IMR-90 (cell line): ENCODE measurements at regions of chr13 and their contacts with region 1.

Region 1: DNA sequence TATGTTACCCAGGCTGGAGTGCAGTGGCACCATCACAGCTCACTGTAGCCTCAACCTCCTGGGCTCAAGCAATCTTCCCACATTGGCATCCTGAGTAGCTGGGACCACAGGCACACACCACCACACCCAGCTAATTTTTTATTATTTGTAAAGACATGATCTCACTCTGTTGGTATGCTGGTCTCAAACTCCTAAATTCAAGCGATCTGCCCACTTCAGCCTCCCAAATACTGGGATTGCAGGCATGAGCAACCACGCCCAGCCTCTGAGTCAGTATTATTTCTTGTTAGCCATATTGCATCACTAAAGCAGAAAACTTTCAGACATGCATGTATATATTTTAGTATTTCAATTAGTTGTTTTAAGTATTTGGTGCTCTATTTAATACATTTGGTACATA is 376.4 kb downstream of the GPC6 start:
- DNase-seq: peak; percentile 82
- ATAC-seq: peak; percentile 93
- H3K4me3 ChIP-seq: no peak overlapping the region
- H3K27ac ChIP-seq: no peak overlapping the region
- H3K4me1 ChIP-seq: peaks cover 3% of the 10 kb centered on the region
- H3K27me3 ChIP-seq: no peaks in the 10 kb centered on the region
- CTCF ChIP-seq: no peak
- POLR2A ChIP-seq: no peak
- RAD21 ChIP-seq: no peak

Region 2: DNA sequence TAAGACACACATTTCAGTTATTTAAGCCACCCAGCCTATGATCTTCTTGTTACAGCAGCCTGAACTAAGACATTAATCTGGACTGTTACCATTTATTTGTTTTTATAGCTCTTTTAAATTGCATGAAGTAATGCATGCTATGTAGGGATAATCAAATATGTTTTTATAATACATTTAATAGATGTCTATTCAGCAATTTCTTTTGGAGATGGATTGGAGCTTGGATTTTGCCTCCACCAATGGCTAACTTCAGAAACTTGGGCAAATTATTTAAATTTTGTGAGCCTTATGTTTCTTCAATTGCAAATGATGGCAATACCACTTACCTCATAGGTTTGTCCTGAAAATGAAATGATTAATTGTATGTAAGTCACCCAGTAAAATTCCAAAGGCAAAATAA is 87.8 kb before region 1 on chr13:
- CTCF ChIA-PET with region 1: no interaction called
- POLR2A ChIA-PET with region 1: interaction called, 12 read pairs
- dilution Hi-C with region 1: no loop called
- in situ Hi-C with region 1: no loop called
- intact Hi-C with region 1: no loop called
- DNase-seq: no peak
- ATAC-seq: no peak
- H3K4me3 ChIP-seq: no peak overlapping the region
- H3K27ac ChIP-seq: no peak overlapping the region
- H3K4me1 ChIP-seq: no peaks in the 10 kb centered on the region
- H3K27me3 ChIP-seq: no peaks in the 10 kb centered on the region
- CTCF ChIP-seq: no peak
- POLR2A ChIP-seq: no peak
- RAD21 ChIP-seq: no peak

Region 3: GRCh38 chr13:93900731-93901130 is 297.7 kb after region 1 on chr13:
- CTCF ChIA-PET with region 1: no interaction called
- POLR2A ChIA-PET with region 1: no interaction called
- dilution Hi-C with region 1: no loop called
- in situ Hi-C with region 1: no loop called
- intact Hi-C with region 1: loop called (anchors 10 kb)
- DNase-seq: peak; percentile 67
- ATAC-seq: peak; percentile 64
- H3K4me3 ChIP-seq: no peak overlapping the region
- H3K27ac ChIP-seq: peak overlapping the region; percentile 79; the same call in 1 of the 2 replicates
- H3K4me1 ChIP-seq: peaks cover 7% of the 10 kb centered on the region
- H3K27me3 ChIP-seq: no peaks in the 10 kb centered on the region
- CTCF ChIP-seq: no peak
- POLR2A ChIP-seq: no peak
- RAD21 ChIP-seq: no peak

Region 4: DNA sequence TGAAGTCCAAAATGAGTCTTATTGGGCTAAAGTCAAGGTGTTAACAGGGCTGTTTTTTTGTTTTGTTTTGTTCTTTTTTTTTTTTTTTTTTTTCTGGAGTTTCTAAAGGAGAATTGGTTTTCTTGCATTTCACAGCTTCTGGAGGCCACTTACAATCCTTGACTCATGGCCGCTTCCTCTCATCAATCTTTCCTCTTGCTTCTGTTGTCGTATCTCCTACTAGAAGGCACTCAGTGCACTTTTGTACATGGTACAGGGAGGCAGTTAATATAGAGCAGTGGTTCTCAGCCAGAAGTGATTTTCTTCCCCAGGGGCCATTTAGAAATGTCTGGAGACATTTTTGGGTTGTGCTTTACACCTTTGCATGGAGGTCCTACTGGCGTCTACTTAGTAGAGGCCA is 329.9 kb after region 1 on chr13:
- CTCF ChIA-PET with region 1: no interaction called
- POLR2A ChIA-PET with region 1: no interaction called
- dilution Hi-C with region 1: no loop called
- in situ Hi-C with region 1: no loop called
- intact Hi-C with region 1: no loop called
- DNase-seq: no peak
- ATAC-seq: no peak
- H3K4me3 ChIP-seq: no peak overlapping the region
- H3K27ac ChIP-seq: no peak overlapping the region
- H3K4me1 ChIP-seq: no peaks in the 10 kb centered on the region
- H3K27me3 ChIP-seq: no peaks in the 10 kb centered on the region
- CTCF ChIP-seq: no peak
- POLR2A ChIP-seq: no peak
- RAD21 ChIP-seq: no peak

Region 5: DNA sequence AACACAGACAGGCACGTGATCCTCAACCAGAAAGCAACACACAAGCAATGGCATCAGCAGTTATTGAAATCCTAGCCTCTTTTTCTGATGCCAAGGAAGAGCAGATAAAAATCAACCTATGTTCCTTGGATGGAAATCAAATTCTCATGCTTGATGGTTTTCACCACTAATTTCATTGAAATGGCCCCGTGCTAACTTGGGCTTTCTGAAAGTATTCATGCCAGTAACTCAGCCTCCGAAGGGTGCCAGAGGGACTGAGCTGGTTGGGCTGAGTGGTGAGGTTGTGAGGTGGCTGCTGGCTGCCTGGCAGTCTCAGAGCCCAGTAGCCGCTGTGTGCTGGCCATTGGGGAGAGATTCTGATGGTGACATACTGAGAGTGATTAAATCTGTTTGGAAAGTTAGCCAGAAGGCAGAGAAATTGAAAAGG is 567.1 kb after region 1 on chr13:
- CTCF ChIA-PET with region 1: no interaction called
- POLR2A ChIA-PET with region 1: no interaction called
- dilution Hi-C with region 1: no loop called
- in situ Hi-C with region 1: no loop called
- intact Hi-C with region 1: no loop called
- DNase-seq: no peak
- ATAC-seq: no peak
- H3K4me3 ChIP-seq: no peak overlapping the region
- H3K27ac ChIP-seq: no peak overlapping the region
- H3K4me1 ChIP-seq: peaks cover 3% of the 10 kb centered on the region; the same call in 1 of the 2 replicates
- H3K27me3 ChIP-seq: no peaks in the 10 kb centered on the region
- CTCF ChIP-seq: no peak
- POLR2A ChIP-seq: no peak
- RAD21 ChIP-seq: no peak